ENCODE measurements at regions of chr2 and their contacts with region 1.

Region 1: DNA sequence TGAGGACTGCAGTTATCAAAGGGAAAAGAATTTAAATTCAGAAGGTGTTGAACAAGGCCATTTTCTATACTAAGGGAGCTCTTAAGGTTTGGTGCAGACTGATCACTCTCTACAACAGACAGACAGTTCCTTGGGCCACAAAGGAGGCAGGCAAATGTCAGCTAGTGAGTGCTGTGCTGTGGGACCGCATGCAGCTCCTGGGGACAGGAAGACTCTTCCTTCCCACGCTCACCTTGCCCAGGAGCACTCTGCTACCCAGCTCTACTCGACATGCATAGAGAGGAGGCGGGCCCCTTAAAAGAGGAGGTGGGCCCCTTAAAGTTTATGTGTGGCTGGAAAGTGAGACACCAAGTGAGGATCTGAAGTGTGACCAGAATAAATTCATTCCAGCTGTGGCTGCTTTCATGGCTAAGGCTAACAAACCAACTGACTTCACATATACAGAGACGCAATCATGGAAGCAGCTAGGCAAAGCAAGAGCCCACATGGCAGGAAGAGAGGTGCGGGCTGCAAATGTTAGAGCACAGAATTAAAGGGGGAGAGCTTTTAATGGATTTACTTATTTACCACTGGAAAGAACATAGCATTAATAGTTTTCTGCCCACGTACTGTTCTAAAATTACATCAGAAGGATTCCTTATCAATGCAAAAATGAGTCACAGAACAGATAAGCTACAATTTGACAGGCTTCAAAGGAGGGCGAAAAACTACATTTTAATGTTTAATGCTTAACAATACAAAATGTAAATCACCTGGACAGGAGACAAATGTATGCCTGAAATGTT is 101.4 kb upstream of the RNU4ATAC start:
- DNase-seq: no peak
- CTCF ChIP-seq: no peak

Region 2: GRCh38 chr2:121409388-121409787 is 19.9 kb before region 1 on chr2:
- CTCF ChIA-PET with region 1: interaction called, 13 read pairs
- POLR2A ChIA-PET with region 1: no interaction called
- DNase-seq: no peak
- CTCF ChIP-seq: no peak

Region 3: GRCh38 chr2:121418494-121419058 is 10.7 kb before region 1 on chr2:
- CTCF ChIA-PET with region 1: interaction called, 12 read pairs
- POLR2A ChIA-PET with region 1: no interaction called
- DNase-seq: no peak
- CTCF ChIP-seq: no peak

Region 4: GRCh38 chr2:121470917-121471316 is 41.6 kb after region 1 on chr2:
- CTCF ChIA-PET with region 1: no interaction called
- POLR2A ChIA-PET with region 1: no interaction called
- DNase-seq: no peak
- CTCF ChIP-seq: no peak

Measured in GM10248 (cell line).